ENCODE measurements at regions of chr4 and their contacts with region 1.

Region 1: DNA sequence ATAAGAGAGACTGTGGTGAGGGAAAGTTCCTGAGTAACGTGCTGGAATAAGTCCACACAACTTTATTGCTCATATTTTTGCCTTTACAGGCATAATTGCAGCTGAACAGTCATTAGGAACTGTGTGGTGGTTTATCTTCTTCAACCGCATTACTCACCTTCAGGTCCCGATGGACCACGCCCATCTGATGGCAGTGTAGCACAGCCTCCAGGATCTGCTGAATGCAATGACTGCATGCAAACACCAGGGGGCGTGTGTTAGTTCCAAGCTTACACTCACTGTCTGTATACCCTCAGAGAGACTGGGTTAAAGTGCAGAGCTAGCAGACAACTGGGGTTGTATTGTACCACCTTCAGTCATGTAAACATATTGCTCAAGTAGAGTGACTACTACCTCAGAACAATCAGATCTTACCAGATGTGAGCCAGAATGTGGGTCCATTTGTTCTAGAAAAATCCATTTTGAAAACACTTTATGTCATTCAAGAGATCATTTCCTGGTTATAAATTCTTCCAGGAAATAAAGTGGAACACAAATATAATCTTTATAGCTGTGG is 214.0 kb downstream of the CAMK2D start:
- DNase-seq: peak; percentile 83
- H3K4me3 ChIP-seq: no peak overlapping the region
- H3K27ac ChIP-seq: peak overlapping the region; percentile 32 to 35
- H3K4me1 ChIP-seq: no peaks in the 10 kb centered on the region
- H3K27me3 ChIP-seq: no peaks in the 10 kb centered on the region
- CTCF ChIP-seq: peak; percentile 95 to 99 (median 96)
- POLR2A ChIP-seq: no peak

Region 2: GRCh38 chr4:113684534-113685091 is 137.0 kb after region 1 on chr4:
- intact Hi-C with region 1: loop called (anchors 5 kb)
- DNase-seq: no peak
- H3K4me3 ChIP-seq: no peak overlapping the region
- H3K27ac ChIP-seq: no peak overlapping the region
- H3K4me1 ChIP-seq: no peaks in the 10 kb centered on the region
- H3K27me3 ChIP-seq: no peaks in the 10 kb centered on the region
- CTCF ChIP-seq: no peak
- POLR2A ChIP-seq: no peak

Measured in prostate gland (tissue), 2 donors.